Panc1 (cell line): ENCODE measurements at regions of chr6 and their contacts with region 1.

Region 1: GRCh38 chr6:99547524-99547923 is 20.9 kb downstream of the CCNC start:
- DNase-seq: no peak
- ATAC-seq: no peak
- H3K4me3 ChIP-seq: no peak overlapping the region
- H3K27ac ChIP-seq: no peak overlapping the region
- H3K4me1 ChIP-seq: no peaks in the 10 kb centered on the region
- H3K27me3 ChIP-seq: no peaks in the 10 kb centered on the region
- CTCF ChIP-seq: no peak

Region 2: GRCh38 chr6:99369533-99369932 is 178.0 kb before region 1 on chr6:
- CTCF ChIA-PET with region 1: no interaction called
- POLR2A ChIA-PET with region 1: interaction called, 23 read pairs
- in situ Hi-C with region 1: no loop called
- intact Hi-C with region 1: no loop called
- DNase-seq: no peak
- ATAC-seq: no peak
- H3K4me3 ChIP-seq: no peak overlapping the region
- H3K27ac ChIP-seq: no peak overlapping the region
- H3K4me1 ChIP-seq: no peaks in the 10 kb centered on the region
- H3K27me3 ChIP-seq: no peaks in the 10 kb centered on the region
- CTCF ChIP-seq: no peak

Region 3: GRCh38 chr6:99836471-99836870 is 288.9 kb after region 1 on chr6:
- CTCF ChIA-PET with region 1: no interaction called
- POLR2A ChIA-PET with region 1: no interaction called
- in situ Hi-C with region 1: no loop called
- intact Hi-C with region 1: no loop called
- DNase-seq: no peak
- ATAC-seq: no peak
- H3K4me3 ChIP-seq: no peak overlapping the region
- H3K27ac ChIP-seq: no peak overlapping the region
- H3K4me1 ChIP-seq: no peaks in the 10 kb centered on the region
- H3K27me3 ChIP-seq: peaks cover 3% of the 10 kb centered on the region; the same call in 1 of the 2 replicates
- CTCF ChIP-seq: no peak